GM12878 (cell line): ENCODE measurements at regions of chr14 and their contacts with region 1.

Region 1: DNA sequence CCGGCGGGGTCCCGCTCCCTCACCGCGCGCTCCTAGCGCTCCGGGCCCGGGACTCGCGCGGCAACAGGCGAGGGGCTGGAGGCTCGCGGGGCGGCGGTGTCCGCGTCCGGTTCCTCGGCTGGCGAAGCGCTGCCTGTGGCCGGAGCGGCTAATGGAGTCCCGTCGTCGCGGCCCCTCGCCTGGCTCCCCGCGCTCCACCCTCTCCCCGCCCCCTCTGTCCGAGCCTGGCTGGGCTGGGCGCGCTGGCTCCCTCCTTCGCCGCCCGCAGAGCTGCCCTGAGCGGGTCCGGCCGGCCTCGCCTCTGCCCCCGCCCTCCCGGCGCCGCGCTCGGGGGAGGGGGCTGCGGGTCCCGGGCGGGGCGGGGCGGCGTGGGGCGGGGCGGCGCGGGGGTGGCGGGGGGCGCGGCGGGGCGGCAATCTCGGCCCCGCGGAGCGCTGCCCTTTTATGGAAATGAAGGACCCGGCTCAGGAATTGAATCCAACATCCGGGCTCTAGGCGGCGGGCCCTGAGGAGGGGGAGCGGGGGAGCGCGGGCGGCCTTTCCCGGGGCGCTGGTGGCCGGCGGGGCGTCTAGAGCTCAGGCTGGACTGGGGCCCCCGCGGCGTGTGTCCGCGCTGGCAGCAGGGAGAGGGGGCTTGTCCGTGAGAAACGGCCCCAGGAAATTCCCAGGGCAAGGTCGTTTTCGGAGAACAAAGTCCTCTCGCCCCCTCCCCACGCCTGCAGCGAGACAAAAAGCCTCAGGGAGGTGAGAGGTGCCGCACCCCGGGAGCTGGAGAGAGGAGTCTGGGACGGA is at the start of gene FERMT2:
- DNase-seq: no peak
- ATAC-seq: peak; percentile 79
- H3K4me3 ChIP-seq: peak within 1 kb of the TSS; percentile 69
- H3K27ac ChIP-seq: no peak within 1 kb of the TSS
- H3K4me1 ChIP-seq: peaks cover 3% of the 10 kb centered on the region; the same call in 1 of the 2 replicates
- H3K27me3 ChIP-seq: peaks cover 1 to 18% of the 10 kb centered on the region in 2 experiments
- CTCF ChIP-seq: no peak
- EP300 ChIP-seq: no peak
- POLR2A ChIP-seq: no peak; the same call in 1 of the 2 replicates
- RAD21 ChIP-seq: no peak
- polyA plus RNA-seq, gene FERMT2: 4.9 to 8.6 TPM

Region 2: DNA sequence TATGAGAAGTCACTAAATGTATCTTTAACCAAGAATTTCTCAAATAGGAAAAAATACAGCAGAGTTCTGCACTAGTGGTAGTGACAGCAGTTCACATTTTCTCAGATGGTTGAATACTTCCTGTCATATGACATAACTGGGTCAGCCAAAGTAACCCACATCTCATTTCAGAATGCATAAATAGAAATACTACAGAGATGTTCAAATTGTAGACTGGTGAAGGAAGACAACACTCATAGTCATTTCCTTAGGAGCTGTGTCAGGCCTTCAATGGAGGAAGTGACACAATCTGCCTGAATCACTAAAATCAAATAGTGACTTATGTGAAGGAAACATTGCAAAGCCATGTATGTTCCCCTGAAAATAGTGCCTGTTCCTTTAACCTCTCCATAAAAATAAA is 32.6 kb before region 1 on chr14:
- CTCF ChIA-PET with region 1: interaction called, 3 read pairs
- POLR2A ChIA-PET with region 1: interaction called, 5 read pairs
- RAD21 ChIA-PET with region 1: interaction called, 12 read pairs
- SMC1A ChIA-PET with region 1: interaction called, 28 read pairs
- in situ Hi-C with region 1: no loop called
- intact Hi-C with region 1: loop called (anchors 5 kb)
- DNase-seq: peak; percentile 62
- ATAC-seq: peak; percentile 93
- H3K4me3 ChIP-seq: no peak overlapping the region
- H3K27ac ChIP-seq: peak overlapping the region; percentile 36
- H3K4me1 ChIP-seq: peaks cover 6% of the 10 kb centered on the region
- H3K27me3 ChIP-seq: no peaks in the 10 kb centered on the region
- CTCF ChIP-seq: no peak
- EP300 ChIP-seq: 0 out of 4 replicates have a peak, but pooled peaks have one; percentile 26 to 40
- POLR2A ChIP-seq: no peak
- RAD21 ChIP-seq: no peak

Region 3: DNA sequence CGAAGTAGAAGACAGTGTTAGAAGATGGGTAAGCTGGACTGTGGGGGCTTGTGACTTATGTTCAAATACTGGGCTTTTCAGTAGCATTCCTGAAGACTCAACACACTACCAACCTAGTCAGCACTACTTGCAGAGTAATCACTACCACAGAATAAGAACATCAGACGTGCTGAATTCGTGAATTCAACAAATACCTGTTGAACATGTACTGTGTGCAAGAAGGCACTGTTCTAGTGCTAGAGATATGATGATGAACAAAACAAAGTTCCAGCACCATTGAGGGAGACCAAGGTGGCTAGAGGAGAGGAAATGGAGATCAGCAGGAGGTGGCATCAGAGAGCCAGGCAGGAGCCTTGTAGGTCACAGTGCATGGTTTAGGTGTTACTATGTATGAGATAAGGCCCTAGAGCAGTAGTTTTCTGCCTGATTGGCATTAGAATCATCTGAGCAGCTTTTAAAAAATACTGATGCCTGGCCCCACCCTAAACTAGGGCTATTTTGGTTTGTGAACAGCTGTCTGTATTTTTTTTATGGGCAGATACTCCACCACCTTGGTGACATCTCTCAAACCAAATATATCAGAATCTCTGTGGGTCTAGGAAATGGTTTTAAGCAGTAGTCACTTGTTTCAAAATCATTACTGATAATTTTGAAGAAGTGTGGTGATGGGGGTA is 27.1 kb before region 1 on chr14:
- CTCF ChIA-PET with region 1: interaction called, 5 read pairs
- POLR2A ChIA-PET with region 1: interaction called, 5 read pairs
- RAD21 ChIA-PET with region 1: interaction called, 12 read pairs
- SMC1A ChIA-PET with region 1: interaction called, 28 read pairs
- in situ Hi-C with region 1: no loop called
- intact Hi-C with region 1: loop called (anchors 5 kb)
- DNase-seq: no peak
- ATAC-seq: peak; percentile 82
- H3K4me3 ChIP-seq: no peak overlapping the region
- H3K27ac ChIP-seq: no peak overlapping the region
- H3K4me1 ChIP-seq: no peaks in the 10 kb centered on the region
- H3K27me3 ChIP-seq: no peaks in the 10 kb centered on the region
- CTCF ChIP-seq: peak; percentile 15 to 45 (median 28); a peak in 3 of 6 replicates
- EP300 ChIP-seq: no peak
- POLR2A ChIP-seq: no peak
- RAD21 ChIP-seq: peak; percentile 52

Region 4: DNA sequence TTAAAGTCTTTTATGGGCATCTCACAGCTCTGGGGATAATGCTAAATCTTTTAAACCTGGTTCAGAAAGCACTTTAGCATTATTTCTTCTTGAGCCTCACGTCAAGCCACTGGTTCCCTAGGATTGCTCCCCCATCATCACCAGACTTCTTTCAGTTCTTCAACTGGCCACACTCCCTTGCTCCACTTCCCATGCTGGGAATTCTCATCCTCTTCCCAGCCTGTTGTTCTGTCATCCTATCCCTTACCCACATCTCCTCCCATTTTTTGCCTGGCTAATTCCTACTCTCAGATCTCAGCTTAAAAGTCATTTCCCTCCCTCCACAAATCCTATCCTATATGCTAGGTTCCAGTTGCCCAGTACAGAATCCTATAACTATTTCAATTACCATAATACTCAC is 14.7 kb before region 1 on chr14:
- CTCF ChIA-PET with region 1: interaction called, 5 read pairs
- POLR2A ChIA-PET with region 1: interaction called, 3 read pairs
- RAD21 ChIA-PET with region 1: interaction called, 19 read pairs
- SMC1A ChIA-PET with region 1: interaction called, 30 read pairs
- in situ Hi-C with region 1: no loop called
- intact Hi-C with region 1: no loop called
- DNase-seq: no peak
- ATAC-seq: no peak
- H3K4me3 ChIP-seq: no peak overlapping the region
- H3K27ac ChIP-seq: no peak overlapping the region
- H3K4me1 ChIP-seq: no peaks in the 10 kb centered on the region
- H3K27me3 ChIP-seq: no peaks in the 10 kb centered on the region; a peak in 1 of 4 replicates
- CTCF ChIP-seq: no peak
- EP300 ChIP-seq: no peak
- POLR2A ChIP-seq: no peak
- RAD21 ChIP-seq: no peak

Region 5: DNA sequence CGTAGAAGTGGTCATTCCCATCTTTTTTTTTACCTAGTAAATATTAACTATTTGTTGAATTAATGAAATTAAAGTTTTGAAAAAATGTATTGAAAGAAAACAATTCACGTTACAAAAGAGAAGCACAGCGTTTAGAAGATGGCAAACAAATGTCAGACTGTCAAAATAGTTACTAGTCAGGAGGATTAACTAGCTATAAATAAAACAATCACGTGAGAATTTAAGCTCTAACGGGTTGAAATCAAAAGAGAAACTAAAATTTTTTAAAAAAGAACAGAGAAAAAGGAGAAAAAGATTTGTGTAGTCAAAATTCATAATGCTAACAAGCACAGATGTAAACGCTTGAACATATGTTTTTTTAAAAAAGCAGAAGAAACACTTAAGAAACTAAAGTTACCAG is 175.6 kb after region 1 on chr14:
- CTCF ChIA-PET with region 1: no interaction called
- POLR2A ChIA-PET with region 1: no interaction called
- RAD21 ChIA-PET with region 1: no interaction called
- SMC1A ChIA-PET with region 1: no interaction called
- in situ Hi-C with region 1: no loop called
- intact Hi-C with region 1: no loop called
- DNase-seq: no peak
- ATAC-seq: peak; percentile 45
- H3K4me3 ChIP-seq: peak overlapping the region; percentile 20
- H3K27ac ChIP-seq: peak overlapping the region; percentile 71
- H3K4me1 ChIP-seq: peaks cover 4% of the 10 kb centered on the region
- H3K27me3 ChIP-seq: no peaks in the 10 kb centered on the region
- CTCF ChIP-seq: no peak
- EP300 ChIP-seq: no peak
- POLR2A ChIP-seq: no peak
- RAD21 ChIP-seq: no peak